Activated CD4-positive, alpha-beta T cell treated with anti-CD3 and anti-CD28 coated beads for 36 hours (primary cell): ENCODE measurements at regions of chr11 and their contacts with region 1.

Region 1: DNA sequence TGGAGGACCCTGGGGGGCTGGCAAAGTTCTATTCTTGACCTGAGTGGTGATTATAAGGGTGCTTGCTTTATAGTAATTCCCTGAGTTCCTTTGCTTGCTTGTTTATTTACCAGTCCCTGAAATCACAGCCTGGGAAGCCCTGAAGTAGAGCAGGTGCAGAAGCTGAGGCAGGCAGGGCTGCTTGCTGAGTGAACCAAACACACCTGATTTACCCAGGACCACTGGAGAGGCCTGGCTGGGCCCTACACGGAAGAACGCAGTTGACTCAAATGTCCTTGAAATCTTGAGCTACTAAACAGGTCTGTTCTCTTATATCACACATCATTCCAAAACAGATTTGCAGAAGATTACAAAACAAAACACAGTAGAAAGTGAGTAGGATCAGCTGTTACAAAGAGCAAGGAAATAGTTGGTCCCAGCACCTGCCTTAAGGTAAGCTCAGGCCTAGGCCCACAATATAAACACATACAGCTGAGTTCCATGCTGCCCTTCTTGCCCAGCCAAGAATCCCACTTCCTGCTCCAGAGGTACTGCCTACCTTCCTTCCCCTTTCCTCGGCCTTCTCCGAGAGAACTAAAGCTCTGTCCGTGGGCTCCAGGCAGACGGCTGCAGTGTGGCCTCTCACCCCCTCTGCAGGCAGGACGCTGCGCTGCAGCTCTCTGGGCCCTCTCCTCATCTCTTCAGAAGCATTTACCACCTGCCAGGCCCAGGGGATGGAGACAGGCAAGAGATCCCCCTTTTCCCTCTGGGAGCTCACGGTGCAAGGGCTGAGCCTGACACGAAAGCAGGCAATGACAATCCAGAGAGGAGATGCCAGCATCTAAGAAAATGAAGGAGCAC is 46.1 kb upstream of the SCUBE2 start:
- DNase-seq: peak; percentile 86
- ATAC-seq: peak; percentile 88
- H3K4me3 Mint-ChIP-seq: no peak overlapping the region
- H3K27ac Mint-ChIP-seq: peak overlapping the region; percentile 79
- H3K4me1 Mint-ChIP-seq: peaks cover 35% of the 10 kb centered on the region
- H3K27me3 Mint-ChIP-seq: no peaks in the 10 kb centered on the region

Region 2: GRCh38 chr11:8688414-8689362 is 448.8 kb before region 1 on chr11:
- CTCF ChIA-PET with region 1: no interaction called
- POLR2A ChIA-PET with region 1: no interaction called
- intact Hi-C with region 1: loop called (anchors 5 to 10 kb)
- DNase-seq: peak; percentile 92
- ATAC-seq: peak; percentile 90
- H3K4me3 Mint-ChIP-seq: peak overlapping the region; percentile 94
- H3K27ac Mint-ChIP-seq: peak overlapping the region; percentile 98
- H3K4me1 Mint-ChIP-seq: peaks cover 56% of the 10 kb centered on the region
- H3K27me3 Mint-ChIP-seq: no peaks in the 10 kb centered on the region

Region 3: GRCh38 chr11:9003573-9004309 is 133.8 kb before region 1 on chr11 and contains the start of gene NRIP3:
- CTCF ChIA-PET with region 1: no interaction called
- POLR2A ChIA-PET with region 1: no interaction called
- intact Hi-C with region 1: loop called (anchors 5 kb)
- DNase-seq: peak; percentile 82
- ATAC-seq: peak; percentile 41
- H3K4me3 Mint-ChIP-seq: peak within 1 kb of the TSS; percentile 65
- H3K27ac Mint-ChIP-seq: peak within 1 kb of the TSS; percentile 38
- H3K4me1 Mint-ChIP-seq: peaks cover 27% of the 10 kb centered on the region
- H3K27me3 Mint-ChIP-seq: peaks cover 34% of the 10 kb centered on the region
- total RNA-seq, gene NRIP3: 2.1 to 2.2 TPM

Region 4: DNA sequence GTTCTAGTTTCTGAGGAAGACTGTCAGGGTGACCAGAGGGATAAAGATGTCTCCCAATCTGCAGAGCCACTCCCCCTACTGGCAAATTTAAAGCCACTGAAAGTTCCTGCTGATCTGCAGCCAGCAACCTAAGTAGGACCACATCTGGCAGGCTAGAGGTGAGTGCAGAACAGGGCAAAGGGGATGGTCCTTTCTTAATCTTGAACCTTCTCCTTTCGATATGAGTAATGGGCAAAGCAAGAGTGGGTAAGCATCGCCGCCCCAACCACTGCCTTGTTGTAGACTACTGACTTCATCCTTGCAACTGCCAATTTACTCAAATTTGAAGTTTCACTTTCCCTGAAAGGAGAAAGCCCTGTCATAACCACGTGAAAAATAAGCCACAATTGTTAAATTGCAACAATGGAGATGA is 76.8 kb before region 1 on chr11:
- CTCF ChIA-PET with region 1: no interaction called
- POLR2A ChIA-PET with region 1: no interaction called
- intact Hi-C with region 1: loop called (anchors 1 to 5 kb)
- DNase-seq: peak; percentile 88
- ATAC-seq: peak; percentile 100
- H3K4me3 Mint-ChIP-seq: no peak overlapping the region
- H3K27ac Mint-ChIP-seq: peak overlapping the region; percentile 29
- H3K4me1 Mint-ChIP-seq: peaks cover 13% of the 10 kb centered on the region
- H3K27me3 Mint-ChIP-seq: peaks cover 25% of the 10 kb centered on the region

Region 5: GRCh38 chr11:9120664-9121485 is 16.6 kb before region 1 on chr11:
- CTCF ChIA-PET with region 1: interaction called, 11 read pairs
- POLR2A ChIA-PET with region 1: no interaction called
- intact Hi-C with region 1: no loop called
- DNase-seq: no peak
- ATAC-seq: no peak
- H3K4me3 Mint-ChIP-seq: no peak overlapping the region
- H3K27ac Mint-ChIP-seq: no peak overlapping the region
- H3K4me1 Mint-ChIP-seq: no peaks in the 10 kb centered on the region
- H3K27me3 Mint-ChIP-seq: peaks cover 2% of the 10 kb centered on the region

Region 6: GRCh38 chr11:9332655-9333054 is 195.1 kb after region 1 on chr11:
- CTCF ChIA-PET with region 1: no interaction called
- POLR2A ChIA-PET with region 1: no interaction called
- intact Hi-C with region 1: no loop called
- DNase-seq: no peak
- ATAC-seq: no peak
- H3K4me3 Mint-ChIP-seq: no peak overlapping the region
- H3K27ac Mint-ChIP-seq: no peak overlapping the region
- H3K4me1 Mint-ChIP-seq: peaks cover 3% of the 10 kb centered on the region
- H3K27me3 Mint-ChIP-seq: no peaks in the 10 kb centered on the region

Region 7: GRCh38 chr11:9506489-9507276 is 369.2 kb after region 1 on chr11:
- CTCF ChIA-PET with region 1: interaction called, 13 read pairs
- POLR2A ChIA-PET with region 1: no interaction called
- intact Hi-C with region 1: no loop called
- DNase-seq: peak; percentile 88
- ATAC-seq: peak; percentile 88
- H3K4me3 Mint-ChIP-seq: no peak overlapping the region
- H3K27ac Mint-ChIP-seq: no peak overlapping the region
- H3K4me1 Mint-ChIP-seq: peaks cover 4% of the 10 kb centered on the region
- H3K27me3 Mint-ChIP-seq: no peaks in the 10 kb centered on the region